GM23248 (cell line): ENCODE measurements at regions of chr21 and their contacts with region 1.

Region 1: DNA sequence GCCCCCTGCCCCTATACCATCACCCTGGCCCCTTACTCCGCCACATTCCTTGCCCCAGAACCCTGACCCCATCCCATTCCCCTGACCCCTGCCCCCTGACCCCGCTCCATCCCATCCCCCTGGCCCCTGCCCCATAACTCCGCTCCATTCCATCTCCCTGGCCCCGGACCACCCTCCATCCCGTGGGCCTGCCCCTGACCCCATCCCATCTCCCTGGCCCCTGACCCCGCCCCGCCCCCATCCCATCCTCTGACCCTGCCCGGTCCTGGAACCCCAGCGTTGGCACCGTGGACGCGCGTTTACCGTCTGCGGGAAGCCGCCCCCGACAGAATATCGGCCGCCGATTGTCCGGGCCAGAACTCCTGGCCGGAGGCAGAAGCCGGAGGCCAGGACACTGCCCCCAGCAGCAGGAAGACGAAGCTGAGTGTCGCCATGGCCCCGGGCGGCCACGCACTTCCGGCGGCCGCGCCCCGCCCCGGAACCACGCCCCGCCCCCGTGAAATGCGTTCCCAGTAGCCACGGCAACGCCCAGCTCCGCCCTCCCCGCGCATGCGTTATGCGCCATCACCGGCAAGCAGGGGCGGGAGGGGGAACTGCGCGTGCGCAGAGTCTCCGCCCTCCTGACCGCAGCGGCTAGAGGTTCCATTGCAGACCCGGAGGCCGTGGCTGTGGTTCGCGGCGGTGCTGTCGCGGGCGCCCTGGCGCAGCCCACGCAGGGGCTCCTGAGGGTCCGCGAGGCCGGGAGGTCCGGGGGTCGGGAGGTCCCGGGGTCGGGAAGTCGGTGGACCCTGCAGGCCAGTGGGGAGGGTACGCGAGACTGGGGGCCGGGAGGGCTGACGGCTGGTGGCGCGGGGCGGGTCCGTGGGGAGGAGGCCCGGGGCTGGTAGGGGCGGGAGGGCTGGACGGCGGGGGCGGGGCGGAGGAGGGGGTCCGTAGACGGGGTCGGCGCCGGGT is at the start of gene POFUT2:
- DNase-seq: peak; percentile 97
- H3K4me3 ChIP-seq: peak within 1 kb of the TSS; percentile 77
- H3K27ac ChIP-seq: peak within 1 kb of the TSS; percentile 63
- H3K4me1 ChIP-seq: peaks cover 14% of the 10 kb centered on the region
- H3K27me3 ChIP-seq: no peaks in the 10 kb centered on the region
- total RNA-seq, gene POFUT2: 48.2 and 54.0 TPM in 2 replicates

Region 2: GRCh38 chr21:45187646-45188045 is 100.1 kb before region 1 on chr21:
- in situ Hi-C with region 1: no loop called
- DNase-seq: peak; percentile 50
- H3K4me3 ChIP-seq: no peak overlapping the region
- H3K27ac ChIP-seq: no peak overlapping the region
- H3K4me1 ChIP-seq: no peaks in the 10 kb centered on the region
- H3K27me3 ChIP-seq: no peaks in the 10 kb centered on the region

Region 3: GRCh38 chr21:45846373-45847160 is 558.9 kb after region 1 on chr21:
- in situ Hi-C with region 1: loop called (anchors 25 kb)
- DNase-seq: peak; percentile 43
- H3K4me3 ChIP-seq: no peak overlapping the region
- H3K27ac ChIP-seq: no peak overlapping the region
- H3K4me1 ChIP-seq: 0 out of 2 replicates have a peak, but pooled peaks cover 2% of the 10 kb centered on the region
- H3K27me3 ChIP-seq: no peaks in the 10 kb centered on the region; the same call in 1 of the 2 replicates